Spleen (tissue), 13 donors: ENCODE measurements at regions of chr17 and their contacts with region 1.

Region 1: DNA sequence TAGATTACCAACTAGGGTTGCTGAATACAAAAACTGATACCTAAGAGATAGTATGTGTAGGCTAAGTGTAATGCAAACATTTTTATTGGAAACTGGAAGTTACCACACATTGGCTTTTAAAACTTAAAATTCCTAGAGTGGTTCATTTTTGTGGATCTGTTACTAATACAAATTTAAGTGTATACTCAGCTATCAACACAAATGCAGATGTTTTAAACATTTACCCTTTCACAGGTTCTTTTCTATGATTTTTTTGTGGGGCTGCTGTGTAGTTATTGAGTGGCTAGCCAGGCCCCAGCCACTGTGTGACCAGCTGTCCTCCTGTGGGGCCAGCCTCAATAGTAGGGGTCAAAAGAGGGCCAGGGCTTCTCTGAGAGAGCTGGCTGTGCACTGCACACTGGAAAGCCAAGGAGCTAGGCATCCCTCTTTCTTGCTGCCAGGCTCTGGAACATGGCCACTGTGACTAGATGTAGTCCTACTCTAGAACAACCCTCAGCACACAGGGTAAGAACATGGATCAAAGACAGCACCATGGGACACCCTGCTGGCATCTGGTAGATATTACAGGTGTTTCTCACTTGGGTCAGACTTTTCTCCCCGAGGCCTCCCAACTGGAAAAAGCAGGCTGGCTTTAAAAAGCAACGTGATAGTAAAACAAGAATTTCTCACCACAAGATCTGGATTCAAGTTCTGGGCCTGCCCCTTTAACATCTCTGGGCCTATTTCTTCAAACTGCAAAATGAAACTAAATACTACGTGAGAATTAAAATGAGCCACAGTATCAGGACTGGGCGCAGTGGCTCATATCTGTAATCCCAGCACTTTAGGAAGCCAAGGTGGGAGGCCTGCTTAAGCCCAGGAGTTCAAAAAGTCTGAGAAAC is 7.3 kb upstream of the VEZF1 start:
- DNase-seq: no peak
- H3K4me3 ChIP-seq: no peak overlapping the region
- H3K27ac ChIP-seq: peak overlapping the region in 6 of 8 donors; percentile 29 to 50 (median 36)
- H3K4me1 ChIP-seq: peaks cover 9 to 71% (median 40%) of the 10 kb centered on the region in 6 donors
- H3K27me3 ChIP-seq: no peaks in the 10 kb centered on the region
- CTCF ChIP-seq: peak; percentile 23 to 78 (median 65)
- POLR2A ChIP-seq: no peak

Region 2: GRCh38 chr17:57859601-57860396 is 135.5 kb before region 1 on chr17:
- intact Hi-C with region 1: loop called (anchors 2 kb)
- DNase-seq: no peak
- H3K4me3 ChIP-seq: no peak overlapping the region
- H3K27ac ChIP-seq: peak overlapping the region in 2 of 8 donors; percentile 74 to 85
- H3K4me1 ChIP-seq: peaks cover 12 to 51% (median 33%) of the 10 kb centered on the region in 6 donors
- H3K27me3 ChIP-seq: peaks cover 0 to 48% (median 8%) of the 10 kb centered on the region in 7 donors
- CTCF ChIP-seq: no peak
- POLR2A ChIP-seq: no peak

Region 3: DNA sequence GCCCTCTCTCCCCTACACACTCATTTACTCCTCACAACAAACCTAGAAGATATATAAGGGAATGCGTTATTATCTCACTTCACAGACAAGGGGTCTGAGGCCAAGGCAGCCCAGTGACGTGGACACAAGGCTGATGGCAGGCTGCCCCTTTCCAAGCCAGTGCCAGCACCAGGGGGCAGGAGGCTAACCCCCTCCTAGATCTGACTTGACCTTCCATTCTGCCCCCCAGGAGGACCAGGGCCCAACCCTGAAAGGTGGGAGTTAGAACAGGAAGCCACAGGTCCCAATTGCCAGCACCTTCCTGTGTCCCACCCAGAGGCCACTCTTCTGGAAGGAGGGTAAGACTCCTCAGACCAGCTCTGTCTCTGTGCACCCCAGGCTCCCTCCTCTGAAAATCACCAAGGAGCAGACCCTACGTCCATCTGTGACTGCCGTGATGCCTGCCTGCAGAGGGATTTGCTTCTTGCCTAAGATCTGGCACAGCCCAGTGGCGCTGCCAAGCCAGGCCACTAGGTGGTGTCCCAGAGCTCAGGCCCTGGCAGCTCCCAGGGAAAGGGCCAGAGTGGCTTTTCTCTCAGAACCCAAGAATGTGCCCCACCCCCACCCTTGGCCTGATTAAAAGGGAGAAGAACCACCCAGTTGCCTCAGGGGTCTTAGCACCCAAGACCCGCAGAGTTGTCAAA is 103.0 kb before region 1 on chr17:
- intact Hi-C with region 1: loop called (anchors 5 kb)
- DNase-seq: peak; percentile 95
- H3K4me3 ChIP-seq: peak overlapping the region in 1 of 8 donors; percentile 44
- H3K27ac ChIP-seq: peak overlapping the region; percentile 53 to 92 (median 86)
- H3K4me1 ChIP-seq: peaks cover 7 to 76% (median 45%) of the 10 kb centered on the region in 6 donors
- H3K27me3 ChIP-seq: peaks cover 0 to 8% (median 0%) of the 10 kb centered on the region in 7 donors
- CTCF ChIP-seq: peak; percentile 92 to 99 (median 96)
- POLR2A ChIP-seq: no peak